GM12878 (cell line): ENCODE measurements at regions of chr10 and their contacts with region 1.

Region 1: DNA sequence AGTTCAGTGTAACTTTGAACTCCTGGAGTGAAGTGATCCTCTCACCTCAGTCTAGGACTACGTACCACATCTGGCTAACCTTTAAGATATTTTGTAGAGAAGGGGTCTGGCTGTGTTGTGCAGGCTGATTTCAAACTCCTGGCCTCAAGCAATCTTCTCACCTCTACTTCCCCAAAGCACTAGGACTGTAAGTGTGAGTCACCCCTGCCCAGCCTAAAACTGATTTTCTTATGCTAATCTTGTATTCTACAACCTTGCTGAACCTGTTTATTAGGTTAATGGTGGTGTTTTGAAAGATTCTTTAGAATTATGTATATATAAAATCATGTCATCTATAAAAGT is 58.0 kb downstream of the LCOR start:
- DNase-seq: no peak
- ATAC-seq: no peak
- H3K4me3 ChIP-seq: no peak overlapping the region
- H3K27ac ChIP-seq: no peak overlapping the region
- H3K4me1 ChIP-seq: no peaks in the 10 kb centered on the region
- H3K27me3 ChIP-seq: no peaks in the 10 kb centered on the region
- CTCF ChIP-seq: no peak
- EP300 ChIP-seq: no peak
- POLR2A ChIP-seq: no peak
- RAD21 ChIP-seq: no peak

Region 2: GRCh38 chr10:96878057-96878456 is 12.1 kb before region 1 on chr10:
- CTCF ChIA-PET with region 1: interaction called, 10 read pairs
- POLR2A ChIA-PET with region 1: interaction called, 5 read pairs
- RAD21 ChIA-PET with region 1: no interaction called
- SMC1A ChIA-PET with region 1: interaction called, 5 read pairs
- in situ Hi-C with region 1: no loop called
- intact Hi-C with region 1: no loop called
- DNase-seq: no peak
- ATAC-seq: no peak
- H3K4me3 ChIP-seq: no peak overlapping the region
- H3K27ac ChIP-seq: no peak overlapping the region
- H3K4me1 ChIP-seq: no peaks in the 10 kb centered on the region; the same call in 1 of the 2 replicates
- H3K27me3 ChIP-seq: no peaks in the 10 kb centered on the region
- CTCF ChIP-seq: no peak
- EP300 ChIP-seq: no peak
- POLR2A ChIP-seq: no peak
- RAD21 ChIP-seq: no peak